GM10248 (cell line): ENCODE measurements at regions of chr2 and their contacts with region 1.

Region 1: DNA sequence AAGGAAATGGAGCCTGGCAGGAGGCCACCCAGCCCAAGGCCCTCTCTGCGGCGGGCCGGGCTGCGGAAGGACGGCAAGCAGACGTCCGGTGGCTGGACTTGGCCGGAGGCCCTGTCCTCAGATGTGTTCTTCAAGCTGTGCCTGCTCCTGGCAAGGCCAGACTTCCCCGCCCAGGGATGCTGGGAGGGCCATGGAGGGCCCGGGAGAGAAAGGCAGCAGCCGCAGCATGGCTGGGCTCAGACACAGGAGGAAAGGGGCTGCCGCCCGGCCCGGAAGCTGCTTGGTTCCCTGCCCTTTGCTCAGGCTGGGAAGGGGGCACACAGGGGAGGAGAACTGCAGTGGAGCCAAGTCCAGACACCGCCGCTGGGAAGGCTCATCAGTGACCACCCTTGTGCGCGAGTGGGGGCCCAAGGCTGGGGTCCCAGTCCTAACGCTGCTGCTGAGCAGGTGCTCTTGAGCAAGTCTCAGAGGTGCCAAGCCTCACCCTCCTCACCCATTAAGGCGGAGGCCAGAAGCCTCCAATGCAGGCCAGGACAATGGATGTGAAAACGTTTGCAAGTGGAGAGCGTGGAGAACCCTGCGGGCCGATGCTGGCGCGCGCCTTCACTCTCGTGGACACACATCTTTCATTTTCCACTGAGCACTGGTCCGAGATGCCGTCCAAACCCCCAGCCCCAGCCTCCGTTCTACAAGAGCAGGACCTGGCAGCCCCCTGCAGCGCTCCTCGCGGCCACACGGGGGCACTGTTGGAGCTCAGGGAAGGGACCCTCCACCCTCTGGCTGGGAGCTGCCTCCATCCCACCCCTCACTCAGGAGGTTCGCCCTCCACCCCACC is 7.9 kb downstream of the CROCC2 start:
- DNase-seq: peak; percentile 79
- CTCF ChIP-seq: peak; percentile 90

Region 2: GRCh38 chr2:239602290-239603282 is 1311.4 kb before region 1 on chr2:
- CTCF ChIA-PET with region 1: no interaction called
- POLR2A ChIA-PET with region 1: no interaction called
- DNase-seq: no peak
- CTCF ChIP-seq: no peak

Region 3: GRCh38 chr2:240898108-240898730 is 15.8 kb before region 1 on chr2:
- CTCF ChIA-PET with region 1: interaction called, 17 read pairs
- POLR2A ChIA-PET with region 1: no interaction called
- DNase-seq: no peak
- CTCF ChIP-seq: no peak

Region 4: DNA sequence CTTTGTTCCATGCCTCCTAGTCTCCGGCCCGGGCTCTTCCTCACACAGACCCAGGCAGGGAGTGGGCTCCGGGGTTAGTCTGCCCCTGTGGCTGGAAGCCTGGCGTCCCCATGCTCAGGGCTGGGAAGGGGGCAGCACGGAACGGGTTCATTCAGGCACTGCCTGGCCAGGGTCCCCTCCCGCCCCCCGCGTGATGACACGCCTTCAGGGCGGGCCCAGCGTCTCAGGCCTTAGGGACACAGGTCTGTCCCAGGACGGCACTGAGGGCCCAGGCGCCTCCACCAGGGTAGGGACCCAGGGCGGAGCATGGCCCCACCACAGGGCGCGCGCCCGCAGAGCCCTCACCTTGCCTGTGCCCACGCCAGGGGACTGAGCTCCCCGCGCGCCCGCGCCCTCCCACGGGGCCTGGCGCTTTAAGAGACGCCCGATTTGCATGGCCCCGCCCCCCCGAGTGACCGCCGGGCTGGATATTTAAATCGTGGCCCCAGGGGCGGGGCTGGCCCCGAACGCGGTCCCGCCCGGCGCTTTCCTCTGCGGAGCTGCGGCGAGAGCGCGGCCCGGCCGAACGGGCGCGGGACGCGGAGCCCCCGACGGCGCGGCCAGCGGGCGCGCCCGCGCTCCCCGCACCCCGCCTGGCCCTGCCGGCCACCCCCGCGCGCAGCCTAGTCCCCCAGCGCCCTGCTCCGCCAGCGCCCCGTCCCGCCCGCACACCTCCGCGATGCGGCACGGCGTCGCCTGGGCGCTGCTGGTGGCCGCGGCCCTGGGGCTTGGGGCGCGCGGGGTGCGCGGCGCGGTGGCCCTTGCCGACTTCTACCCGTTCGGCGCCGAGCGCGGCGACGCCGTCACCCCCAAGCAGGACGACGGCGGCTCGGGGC is 84.3 kb after region 1 on chr2 and contains the start of gene SNED1:
- CTCF ChIA-PET with region 1: no interaction called
- POLR2A ChIA-PET with region 1: no interaction called
- DNase-seq: peak; percentile 68
- CTCF ChIP-seq: no peak